Activated B cell treated with CpG ODN at 0.5 μM for 24 hours (primary cell): ENCODE measurements at regions of chr2 and their contacts with region 1.

Region 1: DNA sequence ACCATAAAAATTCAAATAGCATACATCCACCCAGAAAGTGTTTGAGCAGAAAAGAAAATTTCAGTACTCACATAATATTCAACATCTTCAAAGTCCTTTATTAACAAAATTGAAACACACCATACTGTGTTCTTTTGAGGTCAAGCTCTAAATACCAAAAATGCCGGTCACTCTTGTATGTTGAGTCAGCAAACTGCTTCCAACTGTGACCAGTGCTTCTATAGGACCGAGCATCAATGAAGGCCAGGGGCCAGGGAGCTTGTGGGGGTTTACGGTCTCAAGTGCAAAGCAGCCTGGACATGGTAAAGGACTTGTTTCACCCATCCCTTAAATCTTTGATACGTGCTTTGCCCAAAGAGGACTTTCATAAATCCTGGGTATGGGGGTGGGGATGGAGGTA is 112.7 kb upstream of the REV1 start:
- DNase-seq: no peak
- ATAC-seq: no peak
- H3K4me3 Mint-ChIP-seq: no peak overlapping the region
- H3K27ac Mint-ChIP-seq: peak overlapping the region; percentile 35
- H3K4me1 Mint-ChIP-seq: peaks cover 8% of the 10 kb centered on the region
- H3K27me3 Mint-ChIP-seq: no peaks in the 10 kb centered on the region
- CTCF ChIP-seq: no peak

Region 2: DNA sequence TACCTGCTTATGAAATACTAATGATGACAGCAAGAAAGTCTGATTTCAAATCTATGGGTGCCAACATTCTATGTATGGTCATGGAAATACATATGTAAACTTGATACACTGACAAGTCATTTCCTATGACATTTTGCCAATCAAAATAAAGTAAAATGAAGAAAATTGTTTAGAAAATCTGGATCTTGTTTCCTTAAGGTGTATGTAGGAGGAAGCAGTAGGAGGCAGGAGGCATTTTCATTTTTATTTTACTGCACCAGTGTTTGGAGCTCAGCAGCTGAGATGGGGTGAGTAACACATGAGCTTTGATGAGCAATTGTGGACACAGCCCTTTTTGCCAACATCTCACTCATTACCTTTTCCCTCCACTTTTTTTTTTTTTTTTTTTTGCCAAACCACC is 372.9 kb after region 1 on chr2:
- CTCF ChIA-PET with region 1: no interaction called
- POLR2A ChIA-PET with region 1: interaction called, 11 read pairs
- intact Hi-C with region 1: no loop called
- DNase-seq: no peak
- ATAC-seq: no peak
- H3K4me3 Mint-ChIP-seq: no peak overlapping the region
- H3K27ac Mint-ChIP-seq: peak overlapping the region; percentile 35
- H3K4me1 Mint-ChIP-seq: peaks cover 21% of the 10 kb centered on the region
- H3K27me3 Mint-ChIP-seq: no peaks in the 10 kb centered on the region
- CTCF ChIP-seq: no peak